ENCODE measurements at regions of chr9 and their contacts with region 1.

Region 1: DNA sequence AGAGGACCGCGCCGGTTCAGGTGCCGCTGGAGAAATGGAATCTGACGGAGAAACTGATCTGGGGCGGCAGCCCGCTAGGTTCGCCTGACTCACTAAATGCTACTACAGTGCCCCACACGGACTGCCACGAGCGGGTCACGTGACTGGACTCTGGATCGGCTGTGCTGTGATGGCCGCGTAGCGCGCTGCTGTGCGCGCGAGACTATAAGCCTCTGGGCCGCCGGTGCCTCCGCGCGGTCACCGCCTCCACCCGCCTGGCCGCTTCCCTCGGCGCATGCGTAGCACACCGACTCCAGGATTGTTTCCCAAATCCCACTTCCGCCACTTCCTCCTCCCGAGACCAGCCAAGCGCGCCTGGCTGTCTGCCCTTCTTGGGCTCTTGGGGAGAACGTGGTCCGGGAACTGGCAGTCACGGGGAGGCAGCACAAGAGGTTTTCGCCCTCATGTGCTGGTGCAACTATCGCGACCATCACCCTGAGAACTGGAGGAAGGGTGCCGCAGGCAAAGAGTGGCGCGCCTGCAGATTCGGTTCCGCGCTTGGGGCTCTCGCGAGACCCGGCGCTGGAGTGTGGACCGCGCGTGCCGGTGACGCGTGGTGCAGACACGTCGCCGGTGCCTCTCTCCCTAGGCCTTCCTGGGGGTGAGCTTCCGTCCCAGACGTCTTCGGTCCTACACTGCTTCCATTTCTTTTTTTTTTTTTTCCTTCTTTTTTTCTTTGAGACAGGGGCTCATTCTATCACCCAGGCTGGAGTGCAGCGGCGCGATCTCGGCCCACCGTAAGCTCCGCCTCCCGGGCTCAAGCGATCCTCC is 35.8 kb upstream of the GLDC start:
- DNase-seq: peak; percentile 96
- H3K4me3 Mint-ChIP-seq: peak overlapping the region; percentile 97
- H3K27ac Mint-ChIP-seq: peak overlapping the region; percentile 99
- H3K4me1 Mint-ChIP-seq: peaks cover 13% of the 10 kb centered on the region
- H3K27me3 Mint-ChIP-seq: no peaks in the 10 kb centered on the region

Region 2: DNA sequence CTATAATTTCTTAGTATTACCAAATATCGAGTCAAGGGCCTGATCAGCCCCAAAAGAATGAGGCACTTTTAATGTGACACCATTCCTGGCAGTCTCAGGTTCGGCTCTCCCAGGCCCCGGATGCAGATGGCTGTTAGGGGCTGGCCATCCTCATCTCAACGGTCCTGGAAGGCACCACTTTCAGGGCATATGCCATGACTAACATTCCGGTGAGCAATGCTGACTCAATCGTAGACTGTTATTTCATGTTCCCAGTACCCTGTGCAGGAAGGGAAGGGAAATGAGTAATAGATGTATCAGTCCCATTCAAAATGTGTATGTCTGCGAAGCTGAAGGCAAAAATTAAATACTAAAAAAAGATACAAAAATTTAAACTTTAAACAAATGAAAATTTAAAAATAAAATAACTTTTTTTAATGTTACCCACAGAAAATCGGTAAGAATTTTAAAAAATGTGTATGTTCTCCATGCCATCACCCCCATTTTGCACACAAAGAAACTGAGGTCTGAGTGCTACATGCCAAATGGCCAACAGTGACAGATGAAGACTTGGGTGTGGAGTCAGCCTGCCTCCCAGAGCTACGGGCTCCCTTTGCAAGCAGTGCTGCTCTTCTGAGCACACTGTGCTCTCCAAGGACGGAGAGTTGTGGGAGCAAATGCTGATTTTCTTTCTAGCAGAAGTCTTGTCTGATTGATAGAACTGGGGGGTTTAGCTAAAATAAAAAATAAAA is 114.8 kb before region 1 on chr9:
- intact Hi-C with region 1: loop called (anchors 1 kb)
- DNase-seq: peak; percentile 81
- H3K4me3 Mint-ChIP-seq: peak overlapping the region; percentile 73
- H3K27ac Mint-ChIP-seq: peak overlapping the region; percentile 83
- H3K4me1 Mint-ChIP-seq: peaks cover 15% of the 10 kb centered on the region
- H3K27me3 Mint-ChIP-seq: peaks cover 6% of the 10 kb centered on the region

Region 3: DNA sequence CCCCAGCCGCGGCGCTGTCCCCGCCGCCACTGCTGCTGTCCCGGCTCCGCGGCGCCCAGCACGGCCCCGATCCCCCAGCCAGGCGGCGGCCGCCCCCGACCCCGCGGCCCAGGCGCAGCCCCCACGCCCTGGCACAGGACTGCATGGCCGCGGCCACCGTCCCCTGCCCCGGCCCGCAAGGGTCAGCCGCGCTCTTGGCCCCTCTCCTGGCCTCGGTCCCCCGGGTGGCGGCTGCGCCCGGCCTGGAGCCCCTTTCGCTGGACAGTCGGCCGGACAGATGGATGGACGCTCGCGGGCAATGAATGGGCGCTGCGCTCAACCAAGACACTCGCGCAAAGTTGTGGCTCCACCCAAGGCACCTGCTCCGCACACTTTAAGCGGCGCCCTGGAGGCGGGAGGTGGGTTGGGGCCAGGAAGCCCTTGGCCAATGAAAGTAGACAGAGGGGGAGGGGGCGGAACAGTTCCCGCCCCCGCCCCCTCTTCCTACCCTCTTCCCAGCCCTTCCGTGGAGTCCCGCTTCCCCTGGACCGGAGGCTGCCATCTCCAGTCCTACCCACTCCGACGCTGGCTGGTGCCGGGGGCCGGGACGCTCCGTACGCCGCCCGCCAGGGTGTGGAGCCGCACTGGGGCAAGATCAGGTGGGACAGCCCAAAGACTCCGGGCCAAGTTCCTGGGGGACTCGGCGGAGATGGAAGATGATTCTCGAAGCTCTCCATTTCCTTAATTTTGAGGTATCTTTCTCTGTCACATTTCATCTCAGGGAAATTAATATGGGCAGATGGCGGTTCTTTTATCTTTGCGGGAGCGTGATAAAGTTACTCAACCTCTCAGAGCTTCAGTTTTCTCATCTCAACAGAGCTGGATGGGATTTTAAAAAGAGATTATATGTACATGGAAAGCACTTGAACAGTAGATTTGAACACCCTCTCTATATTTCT is 35.7 kb before region 1 on chr9 and contains the start of gene GLDC:
- intact Hi-C with region 1: loop called (anchors 1 kb)
- DNase-seq: peak; percentile 81
- H3K4me3 Mint-ChIP-seq: peak within 1 kb of the TSS; percentile 84
- H3K27ac Mint-ChIP-seq: no peak within 1 kb of the TSS
- H3K4me1 Mint-ChIP-seq: peaks cover 19% of the 10 kb centered on the region
- H3K27me3 Mint-ChIP-seq: peaks cover 60% of the 10 kb centered on the region
- total RNA-seq, gene GLDC: 0.73 and 1.1 TPM in 2 replicates

Region 4: GRCh38 chr9:6692881-6693361 is 11.6 kb after region 1 on chr9:
- intact Hi-C with region 1: no loop called
- DNase-seq: no peak
- H3K4me3 Mint-ChIP-seq: no peak overlapping the region
- H3K27ac Mint-ChIP-seq: no peak overlapping the region
- H3K4me1 Mint-ChIP-seq: peaks cover 3% of the 10 kb centered on the region
- H3K27me3 Mint-ChIP-seq: no peaks in the 10 kb centered on the region

Region 5: GRCh38 chr9:6715755-6716643 is 34.6 kb after region 1 on chr9:
- intact Hi-C with region 1: loop called (anchors 1 kb)
- DNase-seq: peak; percentile 90
- H3K4me3 Mint-ChIP-seq: peak overlapping the region; percentile 88
- H3K27ac Mint-ChIP-seq: peak overlapping the region; percentile 93
- H3K4me1 Mint-ChIP-seq: peaks cover 4% of the 10 kb centered on the region
- H3K27me3 Mint-ChIP-seq: peaks cover 2% of the 10 kb centered on the region